ENCODE measurements at regions of chr6 and their contacts with region 1.

Region 1: GRCh38 chr6:56637640-56638039 is 5.0 kb downstream of the DST start:
- DNase-seq: peak in 1 of 2 experiments; percentile 44
- H3K4me3 ChIP-seq: no peak overlapping the region
- H3K27ac ChIP-seq: no peak overlapping the region
- H3K4me1 ChIP-seq: peaks cover 2% of the 10 kb centered on the region; the same call in 1 of the 2 replicates
- H3K27me3 ChIP-seq: no peaks in the 10 kb centered on the region
- CTCF ChIP-seq: peak; percentile 79

Region 2: GRCh38 chr6:56549014-56549413 is 88.6 kb before region 1 on chr6:
- CTCF ChIA-PET with region 1: no interaction called
- POLR2A ChIA-PET with region 1: no interaction called
- intact Hi-C with region 1: no loop called
- DNase-seq: no peak
- H3K4me3 ChIP-seq: no peak overlapping the region
- H3K27ac ChIP-seq: no peak overlapping the region
- H3K4me1 ChIP-seq: peaks cover 5% of the 10 kb centered on the region
- H3K27me3 ChIP-seq: no peaks in the 10 kb centered on the region
- CTCF ChIP-seq: no peak

Region 3: DNA sequence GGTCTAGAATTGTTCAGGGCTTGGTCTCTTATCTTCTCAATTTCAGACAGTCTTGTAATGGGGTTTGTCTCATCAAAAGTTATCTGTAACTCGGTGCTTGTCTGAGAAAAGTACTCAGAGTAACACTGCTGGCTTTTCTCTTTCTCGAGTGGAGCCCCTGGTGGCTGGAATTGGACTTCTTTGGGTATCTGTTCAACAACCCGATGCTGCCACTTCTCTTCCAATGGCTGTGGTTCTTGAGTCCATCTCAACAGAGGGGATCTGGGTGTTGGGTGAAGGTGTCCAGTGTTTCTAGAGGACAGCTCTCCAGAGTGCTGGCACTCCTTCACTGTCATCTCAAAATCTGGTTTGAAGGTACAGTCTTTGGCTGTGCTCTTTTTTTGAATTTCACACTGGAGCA is 19.6 kb before region 1 on chr6:
- CTCF ChIA-PET with region 1: no interaction called
- POLR2A ChIA-PET with region 1: no interaction called
- intact Hi-C with region 1: no loop called
- DNase-seq: no peak
- H3K4me3 ChIP-seq: no peak overlapping the region
- H3K27ac ChIP-seq: no peak overlapping the region
- H3K4me1 ChIP-seq: no peaks in the 10 kb centered on the region
- H3K27me3 ChIP-seq: no peaks in the 10 kb centered on the region
- CTCF ChIP-seq: no peak

Region 4: GRCh38 chr6:56659721-56660380 is 22.2 kb after region 1 on chr6:
- CTCF ChIA-PET with region 1: no interaction called
- POLR2A ChIA-PET with region 1: no interaction called
- intact Hi-C with region 1: no loop called
- DNase-seq: no peak
- H3K4me3 ChIP-seq: no peak overlapping the region
- H3K27ac ChIP-seq: no peak overlapping the region
- H3K4me1 ChIP-seq: no peaks in the 10 kb centered on the region
- H3K27me3 ChIP-seq: no peaks in the 10 kb centered on the region
- CTCF ChIP-seq: no peak

Region 5: GRCh38 chr6:56693246-56693607 is 55.6 kb after region 1 on chr6:
- CTCF ChIA-PET with region 1: interaction called, 6 read pairs
- POLR2A ChIA-PET with region 1: interaction called, 3 read pairs
- intact Hi-C with region 1: loop called (anchors 2 kb)
- DNase-seq: peak in 1 of 2 experiments; percentile 69
- H3K4me3 ChIP-seq: no peak overlapping the region
- H3K27ac ChIP-seq: peak overlapping the region; percentile 53
- H3K4me1 ChIP-seq: peaks cover 37% of the 10 kb centered on the region
- H3K27me3 ChIP-seq: no peaks in the 10 kb centered on the region
- CTCF ChIP-seq: no peak

Region 6: DNA sequence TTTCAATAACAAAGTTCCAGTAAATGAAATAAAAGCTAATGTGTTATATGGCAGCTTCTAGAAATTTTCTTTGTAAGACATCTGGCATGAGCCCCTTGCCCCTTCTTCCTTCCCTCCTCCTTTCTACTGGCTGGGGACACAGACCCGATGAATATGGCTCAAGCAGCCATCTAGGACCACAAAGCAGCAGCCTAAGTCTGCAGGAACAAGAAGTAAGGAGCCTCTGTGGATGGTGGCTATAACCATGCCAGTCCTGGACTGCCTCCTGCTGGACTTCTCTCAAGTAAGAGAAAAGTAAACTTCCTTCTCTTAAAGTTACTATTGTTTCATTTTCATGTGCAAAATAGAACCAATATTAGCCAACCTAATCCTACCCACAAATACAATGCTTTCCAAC is 119.9 kb after region 1 on chr6:
- CTCF ChIA-PET with region 1: interaction called, 7 read pairs
- POLR2A ChIA-PET with region 1: no interaction called
- intact Hi-C with region 1: loop called (anchors 5 kb)
- DNase-seq: no peak
- H3K4me3 ChIP-seq: no peak overlapping the region
- H3K27ac ChIP-seq: 0 out of 2 replicates have a peak overlapping the region, but pooled peaks have one; percentile 14
- H3K4me1 ChIP-seq: peaks cover 24% of the 10 kb centered on the region
- H3K27me3 ChIP-seq: no peaks in the 10 kb centered on the region
- CTCF ChIP-seq: peak; percentile 42; the same call in 1 of the 2 replicates

Region 7: GRCh38 chr6:56772737-56773184 is 135.1 kb after region 1 on chr6:
- CTCF ChIA-PET with region 1: no interaction called
- POLR2A ChIA-PET with region 1: no interaction called
- intact Hi-C with region 1: loop called (anchors 5 kb)
- DNase-seq: peak; percentile 29 to 47
- H3K4me3 ChIP-seq: no peak overlapping the region
- H3K27ac ChIP-seq: no peak overlapping the region
- H3K4me1 ChIP-seq: peaks cover 12% of the 10 kb centered on the region
- H3K27me3 ChIP-seq: no peaks in the 10 kb centered on the region
- CTCF ChIP-seq: no peak

Region 8: DNA sequence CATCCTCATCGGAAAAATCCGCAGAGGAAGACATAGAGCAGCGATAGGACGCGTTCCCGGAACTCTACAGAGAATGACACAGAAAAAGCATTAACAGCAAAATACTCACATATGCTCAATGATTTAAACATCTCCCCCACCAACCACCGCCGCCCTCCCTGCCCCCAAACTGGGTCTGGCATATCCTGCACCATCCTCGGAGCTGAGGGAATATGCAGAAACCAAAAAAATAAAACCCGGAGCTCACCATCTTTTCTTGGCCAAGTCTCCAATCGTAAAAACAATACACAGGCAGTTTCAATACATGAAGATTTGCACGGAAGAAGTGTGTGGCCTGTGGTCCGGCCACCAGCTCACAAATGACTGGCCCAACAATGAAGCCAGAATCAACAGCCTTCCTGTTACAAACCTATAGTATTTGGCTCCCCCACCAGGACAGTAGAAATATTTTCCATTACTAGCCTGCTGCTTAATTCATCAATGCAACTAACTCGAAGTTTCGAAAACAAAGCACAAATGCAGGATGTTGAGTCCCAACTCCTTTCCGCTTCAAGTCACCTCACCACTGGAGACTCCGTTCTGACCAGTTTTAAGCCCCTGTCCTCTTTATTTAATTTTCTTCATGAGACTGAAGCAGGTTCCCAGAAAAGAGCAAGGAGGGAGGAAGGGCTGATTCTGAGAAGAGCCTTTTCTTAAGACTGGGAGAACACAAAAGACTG is 214.1 kb after region 1 on chr6:
- CTCF ChIA-PET with region 1: interaction called, 4 read pairs
- POLR2A ChIA-PET with region 1: no interaction called
- intact Hi-C with region 1: loop called (anchors 5 kb)
- DNase-seq: peak; percentile 28 to 73
- H3K4me3 ChIP-seq: peak overlapping the region; percentile 75
- H3K27ac ChIP-seq: peak overlapping the region; percentile 88
- H3K4me1 ChIP-seq: peaks cover 43% of the 10 kb centered on the region
- H3K27me3 ChIP-seq: no peaks in the 10 kb centered on the region
- CTCF ChIP-seq: peak; percentile 76

Region 9: GRCh38 chr6:57021086-57021720 is 383.6 kb after region 1 on chr6:
- CTCF ChIA-PET with region 1: no interaction called
- POLR2A ChIA-PET with region 1: no interaction called
- intact Hi-C with region 1: loop called (anchors 10 kb)
- DNase-seq: peak in 1 of 2 experiments; percentile 64
- H3K4me3 ChIP-seq: no peak overlapping the region
- H3K27ac ChIP-seq: no peak overlapping the region
- H3K4me1 ChIP-seq: no peaks in the 10 kb centered on the region
- H3K27me3 ChIP-seq: no peaks in the 10 kb centered on the region
- CTCF ChIP-seq: peak; percentile 72